ENCODE measurements at regions of chr15 and their contacts with region 1.

Region 1: GRCh38 chr15:92112180-92112579 is 258.7 kb downstream of the SLCO3A1 start:
- DNase-seq: no peak
- ATAC-seq: peak; percentile 86

Region 2: DNA sequence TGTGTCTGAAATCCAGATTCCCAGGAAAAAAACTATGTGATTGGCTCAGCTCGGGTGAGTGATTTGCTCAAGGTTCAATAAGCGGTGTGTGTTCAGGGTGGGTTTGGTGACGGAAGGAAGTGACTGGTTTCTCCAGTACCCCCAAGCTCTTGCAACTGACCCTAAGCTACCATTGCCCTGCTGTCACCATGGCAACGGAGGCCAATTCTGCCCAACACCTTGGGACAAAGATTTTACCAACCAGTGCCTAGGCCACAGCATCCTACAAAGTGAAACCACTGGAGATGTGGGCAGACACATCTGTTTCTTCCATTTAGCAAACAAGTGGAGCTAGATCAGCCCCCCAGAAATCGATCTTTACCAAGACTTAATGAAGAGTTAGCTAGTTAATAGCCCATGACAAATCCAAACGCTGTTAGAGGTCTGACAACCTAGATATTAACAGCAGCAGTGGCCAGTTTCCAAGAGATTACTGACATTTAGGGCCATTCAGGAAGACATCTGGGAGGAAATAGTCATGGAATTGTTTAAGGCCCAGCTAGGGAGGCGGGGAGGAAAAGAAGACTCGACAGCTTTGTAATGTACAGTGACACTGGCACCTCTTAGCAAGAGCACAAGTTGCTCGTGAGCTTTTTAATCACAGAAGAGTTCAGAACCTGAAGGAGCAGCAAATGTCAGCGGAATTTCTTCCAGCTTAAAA is 62.7 kb before region 1 on chr15:
- intact Hi-C with region 1: no loop called
- DNase-seq: no peak
- ATAC-seq: no peak

Region 3: GRCh38 chr15:92161039-92161670 is 49.0 kb after region 1 on chr15:
- intact Hi-C with region 1: loop called (anchors 10 kb)
- DNase-seq: no peak
- ATAC-seq: no peak

Region 4: GRCh38 chr15:92217896-92218295 is 105.7 kb after region 1 on chr15:
- intact Hi-C with region 1: loop called (anchors 5 kb)
- DNase-seq: no peak
- ATAC-seq: no peak

Measured in Right ventricle myocardium inferior (tissue), 1 donor.